HEK293T (cell line): ENCODE measurements at regions of chr2 and their contacts with region 1.

Region 1: DNA sequence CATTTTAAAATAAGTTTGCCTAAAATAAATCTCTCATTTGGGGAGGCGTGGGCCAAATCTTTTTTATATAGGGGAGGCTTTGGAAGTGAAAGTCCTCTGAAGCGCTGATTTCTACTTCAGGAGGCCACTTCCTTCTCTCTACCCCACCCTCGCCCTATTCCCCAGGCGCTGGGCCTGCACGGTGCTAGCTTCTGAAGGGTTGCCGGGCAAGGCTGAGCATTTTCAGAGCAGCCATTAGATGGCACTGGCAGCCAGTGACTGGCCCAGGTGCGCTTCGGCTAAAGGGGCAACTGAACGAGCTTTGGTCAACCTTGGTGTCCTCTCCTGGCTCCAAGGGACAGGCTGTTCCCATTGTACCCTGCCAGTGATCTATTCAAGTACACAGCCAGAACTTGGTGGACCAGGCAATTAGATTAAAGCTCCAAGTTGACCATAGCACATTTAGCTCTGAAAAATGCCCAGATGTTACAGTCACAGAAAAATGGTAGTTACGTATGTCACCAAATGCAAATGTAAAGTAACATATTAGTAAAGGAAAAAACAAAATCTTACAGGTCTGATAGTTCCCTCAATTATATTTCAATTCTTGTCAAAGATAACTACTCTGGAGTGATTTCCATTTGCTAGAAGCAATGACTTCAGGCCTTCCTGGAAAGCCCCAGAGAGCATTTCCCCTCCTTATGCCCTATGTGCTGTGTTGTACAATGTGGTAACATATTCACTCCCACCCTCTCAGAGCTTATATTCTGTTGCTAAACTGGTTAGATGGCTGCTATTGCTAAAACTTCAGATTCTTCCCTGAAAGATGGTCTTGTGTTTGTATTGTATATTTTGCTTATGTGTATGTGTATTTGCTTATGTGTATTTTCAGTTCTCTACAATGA is 2.1 kb downstream of the POMC start:
- DNase-seq: peak; percentile 30

Region 2: DNA sequence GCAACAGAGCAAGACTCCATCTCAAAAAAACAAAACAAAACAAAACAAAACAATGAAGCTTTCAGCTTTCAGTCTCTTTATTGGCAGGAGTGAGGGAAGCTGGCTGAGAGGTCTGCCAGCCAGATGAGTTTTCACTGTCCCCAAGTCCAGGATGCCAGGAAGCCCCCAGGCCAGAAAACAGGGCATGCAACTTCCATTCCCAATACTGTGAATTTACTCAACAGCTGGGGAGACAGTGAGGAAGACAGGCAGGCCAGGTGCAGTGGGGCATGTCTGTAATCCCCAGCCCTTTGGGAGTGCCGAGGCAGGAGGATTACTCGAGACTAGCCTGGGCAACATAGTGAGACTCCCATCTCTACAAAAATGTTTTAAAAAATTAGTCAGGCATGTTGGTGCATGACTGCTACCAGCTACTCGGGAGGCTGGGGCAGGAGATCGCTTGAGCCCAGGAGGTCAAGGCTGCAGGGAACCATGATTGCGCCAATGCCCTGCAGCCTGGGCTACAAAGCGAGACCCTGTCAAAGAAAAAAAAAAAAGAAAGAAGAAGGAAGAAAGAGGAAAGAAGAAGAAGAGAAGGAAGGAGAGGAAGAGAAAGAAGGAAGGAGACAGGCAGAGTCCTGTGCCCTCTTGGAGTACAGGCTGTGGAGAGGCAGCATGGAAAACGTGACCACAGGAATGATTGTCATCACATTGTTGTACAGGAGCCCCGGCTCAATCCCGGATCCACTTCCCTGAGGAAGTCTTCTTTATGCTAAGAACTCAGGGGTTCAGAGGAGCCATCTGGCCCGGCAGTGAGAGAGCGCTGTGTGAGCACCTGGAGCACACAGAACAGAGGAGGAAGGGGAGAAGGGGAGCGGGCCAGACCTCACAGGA is 31.3 kb after region 1 on chr2:
- CTCF ChIA-PET with region 1: interaction called, 15 read pairs
- POLR2A ChIA-PET with region 1: interaction called, 3 read pairs
- DNase-seq: no peak

Region 3: GRCh38 chr2:25234738-25235137 is 68.5 kb after region 1 on chr2:
- CTCF ChIA-PET with region 1: no interaction called
- POLR2A ChIA-PET with region 1: no interaction called
- DNase-seq: no peak